ENCODE measurements at regions of chr22 and their contacts with region 1.

Region 1: DNA sequence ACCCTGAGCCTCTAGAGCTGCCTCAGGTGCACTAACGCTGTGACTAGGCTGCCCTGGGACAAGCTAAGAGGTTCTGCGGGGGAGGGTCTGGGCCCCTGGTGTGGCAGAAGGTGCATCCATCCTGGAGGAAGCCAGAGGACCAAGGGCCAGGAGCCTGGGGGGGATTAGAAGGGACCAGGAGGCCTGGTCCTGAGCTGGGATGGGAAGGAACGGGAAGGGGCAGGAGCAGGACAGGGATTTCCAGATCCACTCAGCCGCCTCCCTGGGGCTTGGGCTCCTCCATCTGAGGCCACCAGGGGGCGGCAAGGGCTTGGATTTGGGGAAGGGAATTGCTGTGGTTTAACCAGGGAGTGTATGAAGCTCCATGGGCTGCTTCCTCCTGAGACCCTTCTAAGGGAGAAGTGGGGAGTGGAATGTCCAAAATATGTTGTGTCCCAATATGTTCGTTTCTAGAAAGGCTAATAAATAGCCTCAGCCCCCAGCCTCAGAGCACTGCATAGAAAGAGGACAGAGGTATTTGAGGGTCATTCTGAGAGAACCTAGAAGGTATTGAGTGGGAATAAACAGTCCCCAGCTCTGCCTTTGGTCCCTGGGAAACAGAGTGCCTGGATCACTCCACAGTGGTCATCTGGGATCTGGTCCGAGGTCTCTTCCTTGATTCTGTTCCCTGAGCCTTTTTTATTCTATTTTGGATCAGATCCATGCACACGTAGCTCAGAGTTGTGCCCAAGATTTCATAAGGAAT is 17.4 kb upstream of the PRAME start:
- DNase-seq: peak; percentile 24
- ATAC-seq: peak; percentile 88
- H3K4me3 ChIP-seq: no peak overlapping the region
- H3K27ac ChIP-seq: no peak overlapping the region
- H3K4me1 ChIP-seq: no peaks in the 10 kb centered on the region
- H3K27me3 ChIP-seq: peaks cover 7% of the 10 kb centered on the region
- CTCF ChIP-seq: peak; percentile 72
- POLR2A ChIP-seq: no peak
- RAD21 ChIP-seq: peak; percentile 52

Region 2: DNA sequence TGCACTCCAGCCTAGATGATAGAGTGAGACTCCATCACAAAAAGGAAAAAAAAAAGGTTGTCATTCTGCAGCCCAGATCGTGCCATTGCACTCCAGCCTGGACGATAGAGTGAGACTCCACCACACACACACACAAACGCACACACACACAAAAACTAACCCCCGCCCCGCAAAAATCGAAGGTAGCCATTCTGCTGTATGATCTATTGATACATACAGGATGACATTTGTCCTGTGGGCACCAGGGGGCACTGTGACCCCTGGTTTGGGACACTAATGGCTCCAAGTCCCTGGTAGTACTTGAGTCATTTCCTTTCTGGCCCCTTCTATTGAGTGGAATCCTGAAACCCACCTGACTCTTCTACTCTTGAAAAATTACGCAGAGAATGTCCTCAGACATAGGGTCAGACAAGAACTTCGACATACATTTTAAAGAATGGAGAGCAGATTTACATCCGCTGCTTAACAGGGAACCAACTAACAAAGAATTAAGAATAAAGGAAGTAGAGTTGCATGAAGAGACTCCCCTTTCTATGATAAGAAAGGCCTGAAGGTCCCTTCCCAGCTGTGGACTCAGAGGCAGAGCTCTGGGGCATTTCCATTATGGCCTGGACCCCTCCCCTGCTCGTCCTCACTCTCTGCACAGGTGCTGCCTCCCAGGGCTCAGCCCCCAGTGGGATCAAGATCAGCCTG is 17.7 kb after region 1 on chr22:
- CTCF ChIA-PET with region 1: interaction called, 51 read pairs
- POLR2A ChIA-PET with region 1: no interaction called
- dilution Hi-C with region 1: no loop called
- in situ Hi-C with region 1: no loop called
- intact Hi-C with region 1: no loop called
- DNase-seq: peak; percentile 53
- ATAC-seq: peak; percentile 64
- H3K4me3 ChIP-seq: no peak overlapping the region
- H3K27ac ChIP-seq: no peak overlapping the region
- H3K4me1 ChIP-seq: no peaks in the 10 kb centered on the region
- H3K27me3 ChIP-seq: peaks cover 12% of the 10 kb centered on the region
- CTCF ChIP-seq: peak; percentile 66
- POLR2A ChIP-seq: no peak
- RAD21 ChIP-seq: peak; percentile 61

Region 3: DNA sequence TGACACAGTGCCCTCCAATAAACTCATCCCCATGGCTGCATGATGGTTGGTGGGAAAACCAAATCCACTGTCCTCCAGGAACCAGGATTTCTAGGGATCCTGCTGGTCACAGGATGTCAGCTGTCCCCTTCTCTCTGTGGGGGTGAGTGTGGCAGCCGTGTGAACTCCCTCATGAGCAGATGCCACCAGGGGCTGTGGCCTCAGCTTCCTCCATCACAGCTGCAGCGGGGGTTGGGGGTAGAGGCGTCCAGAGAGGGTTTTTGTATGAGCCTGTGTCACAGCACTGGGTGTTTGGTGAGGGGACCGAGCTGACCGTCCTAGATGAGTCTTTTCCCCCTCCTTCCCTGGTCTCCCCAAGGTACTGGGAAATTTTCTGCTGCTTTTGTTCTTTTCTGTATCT is 337.6 kb after region 1 on chr22:
- CTCF ChIA-PET with region 1: no interaction called
- POLR2A ChIA-PET with region 1: no interaction called
- dilution Hi-C with region 1: no loop called
- in situ Hi-C with region 1: no loop called
- intact Hi-C with region 1: no loop called
- DNase-seq: no peak
- ATAC-seq: no peak
- H3K4me3 ChIP-seq: no peak overlapping the region
- H3K27ac ChIP-seq: no peak overlapping the region
- H3K4me1 ChIP-seq: no peaks in the 10 kb centered on the region
- H3K27me3 ChIP-seq: peaks cover 9% of the 10 kb centered on the region
- CTCF ChIP-seq: no peak
- POLR2A ChIP-seq: no peak
- RAD21 ChIP-seq: no peak

Measured in IMR-90 (cell line).